OCI-LY7 (cell line): ENCODE measurements at regions of chr20 and their contacts with region 1.

Region 1: GRCh38 chr20:50070991-50071888 is 41.7 kb downstream of the UBE2V1 start:
- DNase-seq: peak; percentile 87
- H3K4me3 ChIP-seq: peak overlapping the region; percentile 56
- H3K27ac ChIP-seq: no peak overlapping the region
- H3K4me1 ChIP-seq: peaks cover 7% of the 10 kb centered on the region
- CTCF ChIP-seq: peak; percentile 99

Region 2: GRCh38 chr20:50041246-50041873 is 29.9 kb before region 1 on chr20:
- CTCF ChIA-PET with region 1: interaction called, 4 read pairs
- POLR2A ChIA-PET with region 1: interaction called, 5 read pairs
- intact Hi-C with region 1: loop called (anchors 2 kb)
- DNase-seq: peak; percentile 88
- H3K4me3 ChIP-seq: peak overlapping the region; percentile 69
- H3K27ac ChIP-seq: peak overlapping the region; percentile 88
- H3K4me1 ChIP-seq: peaks cover 36% of the 10 kb centered on the region
- CTCF ChIP-seq: no peak

Region 3: DNA sequence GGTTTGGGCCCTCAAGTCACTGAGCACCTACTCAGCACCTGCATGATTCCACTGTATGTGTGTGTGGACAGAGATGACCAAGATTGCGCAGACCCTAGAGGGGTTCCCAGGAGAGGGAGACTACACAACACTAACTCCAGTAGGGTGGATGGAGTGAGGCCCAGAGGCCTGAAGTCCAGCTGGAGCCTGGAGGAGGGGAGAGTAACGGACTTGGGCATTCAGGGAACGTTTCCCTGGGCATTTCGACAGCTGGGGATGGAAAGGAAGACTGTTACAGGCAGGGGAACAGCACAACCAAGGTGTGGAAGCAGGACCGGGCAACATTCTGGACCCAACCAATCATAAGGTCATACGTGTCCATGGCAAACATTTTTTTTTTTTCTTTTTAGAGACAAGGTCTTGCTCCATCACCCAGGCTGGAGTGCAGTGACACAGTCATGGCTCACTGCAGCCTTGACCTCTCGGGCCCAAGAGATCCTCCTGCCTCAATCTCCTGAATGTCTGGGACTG is 108.3 kb after region 1 on chr20:
- CTCF ChIA-PET with region 1: no interaction called
- POLR2A ChIA-PET with region 1: no interaction called
- intact Hi-C with region 1: loop called (anchors 5 kb)
- DNase-seq: no peak
- H3K4me3 ChIP-seq: no peak overlapping the region
- H3K27ac ChIP-seq: no peak overlapping the region
- H3K4me1 ChIP-seq: no peaks in the 10 kb centered on the region
- CTCF ChIP-seq: no peak